ENCODE measurements at regions of chr22 and their contacts with region 1.

Region 1: GRCh38 chr22:22593964-22594656 is 35.0 kb upstream of the PRAME start:
- DNase-seq: peak; percentile 47 to 63
- H3K4me3 ChIP-seq: no peak overlapping the region
- H3K4me1 ChIP-seq: no peaks in the 10 kb centered on the region
- H3K27me3 ChIP-seq: peaks cover 6% of the 10 kb centered on the region; the same call in 1 of the 2 replicates

Region 2: GRCh38 chr22:22687638-22688500 is 93.8 kb after region 1 on chr22:
- in situ Hi-C with region 1: loop called (anchors 25 kb)
- DNase-seq: peak; percentile 39 to 50
- H3K4me3 ChIP-seq: no peak overlapping the region
- H3K4me1 ChIP-seq: no peaks in the 10 kb centered on the region
- H3K27me3 ChIP-seq: no peaks in the 10 kb centered on the region

Region 3: DNA sequence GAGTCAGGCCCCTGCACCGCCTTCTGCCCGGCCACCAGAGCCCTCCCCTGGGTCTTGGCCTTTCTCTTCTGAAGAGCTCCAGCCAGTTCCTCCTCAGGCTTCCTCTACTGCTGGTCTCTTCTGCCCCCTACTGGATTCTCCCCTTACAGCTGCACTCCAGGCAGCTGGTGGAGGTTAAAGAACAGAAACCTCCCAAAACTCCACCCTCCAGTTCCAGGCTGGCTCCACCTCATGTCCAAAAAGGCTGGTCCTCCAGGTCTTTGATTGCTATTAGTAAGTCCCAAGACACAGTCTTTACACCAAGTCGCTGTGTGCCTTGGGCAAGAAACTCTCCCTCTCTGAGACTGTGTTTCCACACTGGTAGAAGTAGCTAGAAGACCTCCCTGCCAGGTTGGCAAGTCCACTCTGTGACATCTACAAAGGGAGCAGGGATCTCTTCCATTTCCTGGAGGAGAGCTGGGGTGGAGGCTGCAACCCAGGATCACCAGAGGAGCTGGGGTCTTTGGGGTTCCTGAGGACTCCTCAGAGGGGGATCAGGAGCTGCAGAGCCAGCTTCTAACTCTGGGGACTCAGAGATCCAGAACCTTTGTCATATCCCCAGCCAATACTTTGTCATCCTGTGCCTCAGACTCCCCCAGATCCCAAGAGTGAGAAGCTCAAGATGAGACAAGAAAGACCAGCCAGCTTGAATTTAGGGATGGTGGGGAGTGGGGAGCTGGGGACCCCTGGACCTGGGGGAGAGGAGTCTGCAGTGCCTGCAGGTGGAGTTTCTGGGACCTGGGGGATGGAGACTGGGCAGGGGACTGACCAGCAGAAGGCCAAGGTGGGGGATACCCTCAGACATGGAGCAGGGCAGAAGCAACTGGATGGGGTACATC is 290.1 kb after region 1 on chr22:
- in situ Hi-C with region 1: loop called (anchors 10 kb)
- DNase-seq: peak; percentile 58 to 75
- H3K4me3 ChIP-seq: no peak overlapping the region
- H3K4me1 ChIP-seq: no peaks in the 10 kb centered on the region
- H3K27me3 ChIP-seq: peaks cover 5% of the 10 kb centered on the region; the same call in 1 of the 2 replicates

Measured in HAP-1 (cell line).